GM10248 (cell line): ENCODE measurements at regions of chr12 and their contacts with region 1.

Region 1: DNA sequence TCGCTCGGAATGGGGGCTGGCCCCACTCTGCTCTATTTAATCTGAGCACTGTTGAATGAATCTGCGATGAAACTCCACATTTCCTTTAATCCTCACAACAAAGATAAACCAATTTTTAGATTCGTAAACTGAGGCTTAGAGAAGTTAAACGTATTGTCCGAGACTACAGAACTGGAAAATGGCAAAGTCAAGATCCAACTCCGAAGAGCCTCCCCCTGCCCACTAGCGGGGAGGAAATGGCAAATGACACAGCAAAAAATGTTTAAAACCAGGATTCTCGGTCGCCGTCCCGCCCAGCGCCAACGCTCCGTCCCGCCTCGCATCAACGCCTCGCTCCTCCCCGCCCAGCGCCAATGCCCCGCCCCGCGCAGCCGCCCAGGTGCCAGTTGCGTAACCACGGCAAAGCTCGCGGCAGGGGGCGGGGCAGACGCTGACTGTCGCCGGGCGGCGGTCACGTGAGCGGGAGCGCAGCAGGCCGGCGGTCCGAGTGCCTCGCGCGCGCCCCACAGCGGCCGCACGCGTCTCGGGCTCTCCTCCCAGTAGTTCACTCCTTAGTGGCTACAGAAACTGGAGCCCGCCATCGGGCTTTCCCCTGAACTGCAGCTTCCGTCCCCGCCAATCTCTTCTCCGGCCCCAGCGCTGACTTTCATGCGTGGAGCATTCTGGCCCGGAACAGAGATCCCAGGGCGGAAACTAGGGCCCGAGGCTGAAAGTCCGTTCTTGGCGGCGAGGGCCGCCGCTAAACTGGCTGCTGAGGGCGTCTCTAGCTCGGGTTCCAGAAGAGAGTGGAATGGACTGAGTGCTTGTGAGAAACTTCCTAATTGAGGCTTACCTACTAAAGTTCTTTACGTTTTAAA is 13.6 kb upstream of the LRRC23 start:
- DNase-seq: peak; percentile 98
- CTCF ChIP-seq: peak; percentile 85

Region 2: GRCh38 chr12:6613776-6614512 is 277.1 kb before region 1 on chr12:
- CTCF ChIA-PET with region 1: no interaction called
- POLR2A ChIA-PET with region 1: no interaction called
- DNase-seq: peak; percentile 70
- CTCF ChIP-seq: peak; percentile 19

Region 3: GRCh38 chr12:6735448-6736191 is 155.4 kb before region 1 on chr12:
- CTCF ChIA-PET with region 1: no interaction called
- POLR2A ChIA-PET with region 1: no interaction called
- DNase-seq: peak; percentile 56
- CTCF ChIP-seq: peak; percentile 81

Region 4: DNA sequence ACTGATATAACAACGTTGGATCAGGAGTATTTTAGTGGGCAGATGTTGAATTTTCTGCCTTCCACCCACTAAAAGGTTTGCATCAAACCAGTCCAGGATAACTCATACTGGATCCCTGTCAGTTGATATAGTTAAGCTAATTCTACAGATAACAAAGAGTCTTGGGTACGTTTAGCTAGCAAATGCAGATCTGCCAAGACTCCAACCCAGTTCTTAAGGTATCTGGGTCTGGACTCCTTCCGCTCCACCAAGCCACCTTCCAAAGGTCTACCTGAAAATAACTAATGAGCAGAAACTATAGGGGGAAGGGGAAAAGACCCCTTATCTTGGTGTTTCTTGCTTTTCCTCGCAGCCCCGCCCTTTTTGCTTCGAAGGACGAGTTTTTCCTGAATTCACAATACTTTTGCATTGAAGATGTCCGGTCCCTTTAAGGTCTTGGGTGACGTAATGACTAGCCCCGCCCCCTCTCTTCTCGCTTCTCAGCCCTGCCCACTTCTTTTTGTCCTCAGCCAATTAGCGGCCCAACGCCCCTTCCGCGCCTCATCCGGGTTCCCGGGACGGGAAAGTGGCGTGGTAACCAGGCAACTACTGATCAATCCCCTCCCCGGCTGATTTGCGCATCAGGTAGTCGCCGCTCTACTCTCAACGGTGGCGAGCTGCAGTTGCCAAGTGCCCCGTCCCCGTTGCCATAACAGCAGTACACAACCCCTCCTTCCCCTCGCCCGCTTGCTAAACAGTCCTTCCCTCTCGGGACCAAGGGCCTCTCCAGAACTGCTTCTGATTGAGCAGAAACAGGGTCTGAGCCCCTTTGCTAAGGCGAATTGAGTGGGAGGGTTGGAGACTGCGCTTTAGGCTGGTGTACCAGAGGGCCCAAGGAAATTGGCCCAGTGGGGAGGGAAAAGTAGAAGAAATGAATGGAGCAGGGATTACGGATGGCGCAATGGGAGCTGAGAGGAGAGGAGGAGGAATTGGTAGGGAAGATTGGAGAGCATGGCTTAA is 13.6 kb after region 1 on chr12 and contains the start of gene LRRC23:
- CTCF ChIA-PET with region 1: interaction called, 25 read pairs
- POLR2A ChIA-PET with region 1: interaction called, 9 read pairs
- DNase-seq: peak; percentile 95
- CTCF ChIP-seq: no peak

Region 5: GRCh38 chr12:6914246-6914946 is 23.4 kb after region 1 on chr12 and contains the start of gene ENO2:
- CTCF ChIA-PET with region 1: interaction called, 16 read pairs
- POLR2A ChIA-PET with region 1: interaction called, 3 read pairs
- DNase-seq: peak; percentile 89
- CTCF ChIP-seq: no peak